ENCODE measurements at regions of chr10 and their contacts with region 1.

Region 1: DNA sequence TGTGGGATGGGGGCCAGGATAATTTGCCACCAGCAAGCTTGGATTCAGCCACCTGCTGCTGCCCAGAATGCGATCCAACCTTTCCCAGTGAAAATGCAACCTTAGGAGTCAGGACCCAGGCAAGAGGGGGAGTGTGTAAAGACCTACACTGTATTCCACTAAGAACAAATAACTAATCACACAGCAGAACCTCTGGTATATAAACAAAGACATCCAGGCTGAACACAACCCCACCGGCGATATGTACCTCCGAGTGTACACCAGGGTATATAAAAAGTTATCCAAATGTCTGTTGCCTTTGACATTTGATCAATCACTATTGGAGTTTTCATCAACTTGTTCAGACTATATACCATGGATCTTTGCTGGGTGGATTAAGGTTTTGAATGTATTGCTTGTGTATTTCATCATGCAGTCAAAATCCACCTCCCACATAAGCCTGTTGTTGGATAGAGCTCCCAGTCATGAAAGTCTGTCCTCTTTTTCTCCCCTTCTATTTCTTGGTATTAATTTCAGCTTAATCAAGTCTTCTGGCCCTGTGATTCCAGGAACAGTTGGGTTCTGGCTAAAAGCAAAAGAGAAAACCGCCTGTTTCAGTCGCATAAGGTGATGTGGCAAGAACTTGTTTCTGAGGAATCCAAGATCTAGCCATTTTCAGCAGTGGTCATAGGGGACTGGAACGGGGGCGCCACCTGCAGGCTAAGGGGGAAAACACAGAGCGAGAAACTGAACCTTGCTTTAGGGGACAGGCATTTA is 290.7 kb downstream of the CCDC3 start:
- DNase-seq: peak; percentile 85
- H3K4me3 Mint-ChIP-seq: no peak overlapping the region
- H3K27ac Mint-ChIP-seq: peak overlapping the region; percentile 83
- H3K4me1 Mint-ChIP-seq: peaks cover 68% of the 10 kb centered on the region
- H3K27me3 Mint-ChIP-seq: no peaks in the 10 kb centered on the region

Region 2: GRCh38 chr10:12264204-12264940 is 446.4 kb before region 1 on chr10:
- CTCF ChIA-PET with region 1: interaction called, 61 read pairs
- POLR2A ChIA-PET with region 1: interaction called, 3 read pairs
- DNase-seq: peak; percentile 75
- H3K4me3 Mint-ChIP-seq: peak overlapping the region; percentile 63
- H3K27ac Mint-ChIP-seq: peak overlapping the region; percentile 65
- H3K4me1 Mint-ChIP-seq: peaks cover 30% of the 10 kb centered on the region
- H3K27me3 Mint-ChIP-seq: no peaks in the 10 kb centered on the region

Region 3: GRCh38 chr10:12699258-12699700 is 11.5 kb before region 1 on chr10:
- CTCF ChIA-PET with region 1: interaction called, 24 read pairs
- POLR2A ChIA-PET with region 1: interaction called, 6 read pairs
- DNase-seq: peak; percentile 42
- H3K4me3 Mint-ChIP-seq: no peak overlapping the region
- H3K27ac Mint-ChIP-seq: peak overlapping the region; percentile 86
- H3K4me1 Mint-ChIP-seq: peaks cover 46% of the 10 kb centered on the region
- H3K27me3 Mint-ChIP-seq: no peaks in the 10 kb centered on the region

Region 4: GRCh38 chr10:12726971-12727831 is 16.4 kb after region 1 on chr10:
- CTCF ChIA-PET with region 1: interaction called, 34 read pairs
- POLR2A ChIA-PET with region 1: no interaction called
- DNase-seq: peak; percentile 24
- H3K4me3 Mint-ChIP-seq: no peak overlapping the region
- H3K27ac Mint-ChIP-seq: peak overlapping the region; percentile 44
- H3K4me1 Mint-ChIP-seq: peaks cover 23% of the 10 kb centered on the region
- H3K27me3 Mint-ChIP-seq: no peaks in the 10 kb centered on the region

Region 5: GRCh38 chr10:12741360-12741804 is 30.6 kb after region 1 on chr10:
- CTCF ChIA-PET with region 1: no interaction called
- POLR2A ChIA-PET with region 1: no interaction called
- DNase-seq: no peak
- H3K4me3 Mint-ChIP-seq: no peak overlapping the region
- H3K27ac Mint-ChIP-seq: no peak overlapping the region
- H3K4me1 Mint-ChIP-seq: no peaks in the 10 kb centered on the region
- H3K27me3 Mint-ChIP-seq: no peaks in the 10 kb centered on the region

Region 6: DNA sequence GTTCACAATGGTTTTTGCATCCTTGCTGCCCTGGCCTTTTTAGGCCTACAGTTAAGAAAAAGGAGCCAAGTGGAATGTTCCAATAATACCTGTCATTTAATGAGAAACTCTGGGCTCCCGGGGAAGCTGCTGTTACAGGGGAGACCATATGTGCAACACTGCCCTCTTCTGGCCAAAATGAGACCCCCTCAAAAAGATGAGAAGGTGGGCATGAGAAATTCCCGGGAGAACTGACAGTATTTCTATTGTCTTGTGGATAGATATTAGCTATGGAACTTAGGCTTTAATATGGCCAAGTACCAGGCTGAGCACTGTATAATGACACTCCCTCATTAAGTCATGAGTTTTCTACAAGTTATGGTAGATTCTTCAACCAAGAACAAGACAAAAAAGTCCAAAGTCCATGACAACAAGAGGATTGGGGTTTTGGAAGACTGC is 191.4 kb after region 1 on chr10:
- CTCF ChIA-PET with region 1: interaction called, 10 read pairs
- POLR2A ChIA-PET with region 1: interaction called, 3 read pairs
- DNase-seq: peak; percentile 43
- H3K4me3 Mint-ChIP-seq: no peak overlapping the region
- H3K27ac Mint-ChIP-seq: no peak overlapping the region
- H3K4me1 Mint-ChIP-seq: no peaks in the 10 kb centered on the region
- H3K27me3 Mint-ChIP-seq: peaks cover 4% of the 10 kb centered on the region

Measured in activated CD4-positive, alpha-beta memory T cell treated with anti-CD3 and anti-CD28 coated beads, Interleukin-2, amount 10 ng/mL, durations not matched to agents 7 days and 5 days (primary cell).